Naive thymus-derived CD4-positive, alpha-beta T cell (primary cell): ENCODE measurements at regions of chr11 and their contacts with region 1.

Region 1: DNA sequence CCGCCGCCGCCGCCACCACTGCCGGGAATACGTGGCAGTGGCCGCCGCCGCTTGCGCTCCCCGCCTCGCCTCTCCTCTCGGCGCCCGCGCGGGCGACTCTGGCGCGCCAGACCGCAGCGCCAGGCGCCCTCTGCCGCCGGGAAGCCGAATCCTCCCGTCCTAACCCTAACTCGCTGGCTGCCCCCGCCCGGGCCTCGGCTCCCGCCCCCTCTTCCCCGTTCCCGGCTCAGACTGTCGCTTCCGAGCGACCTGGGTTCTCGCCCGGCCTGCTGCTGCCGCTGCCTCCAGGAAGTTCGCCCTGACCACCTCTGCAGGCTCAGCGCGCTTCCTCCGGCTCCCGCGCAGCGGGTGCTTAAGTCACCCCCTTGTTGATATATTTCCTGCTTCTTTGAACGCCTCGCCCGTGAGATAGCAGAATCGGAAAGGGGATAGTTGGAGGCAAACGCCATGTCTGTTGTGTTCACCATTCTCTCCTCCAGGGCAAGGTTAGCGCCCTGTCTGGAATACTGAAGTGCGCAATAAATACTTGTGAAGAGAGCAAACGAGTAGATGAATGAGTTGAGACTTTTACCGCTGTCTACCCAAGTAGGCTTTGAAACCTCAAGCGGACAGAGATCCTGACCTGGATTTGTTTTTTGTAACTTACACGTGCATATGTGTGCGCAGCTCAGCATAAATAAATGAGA is at the start of gene SMCO4:
- DNase-seq: peak; percentile 17 to 82 (median 40)
- ATAC-seq: peak; percentile 83
- H3K4me3 ChIP-seq: peak within 1 kb of the TSS; percentile 48
- H3K4me3 Mint-ChIP-seq: peak within 1 kb of the TSS; percentile 88 to 95 (median 92)
- H3K27ac ChIP-seq: peak within 1 kb of the TSS; percentile 33
- H3K27ac Mint-ChIP-seq: peak within 1 kb of the TSS in 7 of 9 donors; percentile 9 to 87 (median 52)
- H3K4me1 ChIP-seq: no peaks in the 10 kb centered on the region
- H3K4me1 Mint-ChIP-seq: peaks cover 6 to 39% (median 21%) of the 10 kb centered on the region in 7 donors
- H3K27me3 ChIP-seq: no peaks in the 10 kb centered on the region
- H3K27me3 Mint-ChIP-seq: peaks cover 0 to 16% (median 4%) of the 10 kb centered on the region in 5 donors
- total RNA-seq, gene SMCO4: 2.9 to 34.7 (median 5.9) TPM

Region 2: GRCh38 chr11:93197380-93198214 is 345.8 kb before region 1 on chr11 and contains the start of gene SLC36A4:
- CTCF ChIA-PET with region 1: no interaction called
- POLR2A ChIA-PET with region 1: no interaction called
- intact Hi-C with region 1: loop called in 1 of 2 experiments (anchors 2 kb)
- DNase-seq: peak; percentile 78 to 90 (median 88)
- ATAC-seq: peak; percentile 94
- H3K4me3 ChIP-seq: peak within 1 kb of the TSS; percentile 54
- H3K4me3 Mint-ChIP-seq: peak within 1 kb of the TSS; percentile 88 to 98 (median 95)
- H3K27ac ChIP-seq: peak within 1 kb of the TSS; percentile 96
- H3K27ac Mint-ChIP-seq: peak within 1 kb of the TSS; percentile 87 to 99 (median 97)
- H3K4me1 ChIP-seq: peaks cover 0 to 4% of the 10 kb centered on the region in 2 donors
- H3K4me1 Mint-ChIP-seq: peaks cover 15 to 40% (median 30%) of the 10 kb centered on the region in 7 donors
- H3K27me3 ChIP-seq: no peaks in the 10 kb centered on the region
- H3K27me3 Mint-ChIP-seq: peaks cover 0 to 24% (median 5%) of the 10 kb centered on the region in 5 donors
- total RNA-seq, gene SLC36A4: 12.0 to 22.0 (median 20.0) TPM

Region 3: DNA sequence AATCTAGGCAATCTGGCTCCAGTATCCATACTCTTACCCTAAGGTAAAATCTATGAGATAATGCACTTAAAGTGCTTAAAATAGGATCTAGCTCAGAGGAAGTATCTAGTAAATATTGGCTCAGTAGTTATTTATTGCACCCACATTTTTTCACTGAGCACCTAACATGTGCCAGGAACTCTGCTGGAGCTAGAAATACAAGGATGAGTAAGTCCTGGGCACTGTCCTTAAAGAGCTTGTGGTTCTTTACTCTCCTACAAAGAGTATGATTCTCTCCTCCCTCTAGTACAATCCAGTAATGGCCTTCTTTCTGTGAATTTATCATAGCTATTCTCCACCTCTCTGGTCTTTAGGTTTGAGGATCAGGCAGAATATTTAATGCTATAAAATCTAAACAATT is 153.7 kb before region 1 on chr11:
- CTCF ChIA-PET with region 1: no interaction called
- POLR2A ChIA-PET with region 1: no interaction called
- intact Hi-C with region 1: loop called in 1 of 2 experiments (anchors 10 kb)
- DNase-seq: no peak
- ATAC-seq: no peak
- H3K4me3 ChIP-seq: no peak overlapping the region
- H3K4me3 Mint-ChIP-seq: no peak overlapping the region
- H3K27ac ChIP-seq: no peak overlapping the region
- H3K27ac Mint-ChIP-seq: no peak overlapping the region
- H3K4me1 ChIP-seq: no peaks in the 10 kb centered on the region
- H3K4me1 Mint-ChIP-seq: no peaks in the 10 kb centered on the region
- H3K27me3 ChIP-seq: no peaks in the 10 kb centered on the region
- H3K27me3 Mint-ChIP-seq: peaks cover 8 to 21% (median 18%) of the 10 kb centered on the region in 5 donors

Region 4: GRCh38 chr11:93529707-93530467 is 13.5 kb before region 1 on chr11:
- CTCF ChIA-PET with region 1: interaction called, 4 read pairs
- POLR2A ChIA-PET with region 1: no interaction called
- intact Hi-C with region 1: loop called in 1 of 2 experiments (anchors 1 kb)
- DNase-seq: no peak
- ATAC-seq: peak; percentile 52
- H3K4me3 ChIP-seq: no peak overlapping the region
- H3K4me3 Mint-ChIP-seq: peak overlapping the region in 2 of 10 donors; percentile 22 to 66
- H3K27ac ChIP-seq: no peak overlapping the region
- H3K27ac Mint-ChIP-seq: peak overlapping the region in 4 of 9 donors; percentile 38 to 77 (median 74)
- H3K4me1 ChIP-seq: no peaks in the 10 kb centered on the region
- H3K4me1 Mint-ChIP-seq: peaks cover 7 to 78% (median 26%) of the 10 kb centered on the region in 7 donors
- H3K27me3 ChIP-seq: no peaks in the 10 kb centered on the region
- H3K27me3 Mint-ChIP-seq: no peaks in the 10 kb centered on the region

Region 5: DNA sequence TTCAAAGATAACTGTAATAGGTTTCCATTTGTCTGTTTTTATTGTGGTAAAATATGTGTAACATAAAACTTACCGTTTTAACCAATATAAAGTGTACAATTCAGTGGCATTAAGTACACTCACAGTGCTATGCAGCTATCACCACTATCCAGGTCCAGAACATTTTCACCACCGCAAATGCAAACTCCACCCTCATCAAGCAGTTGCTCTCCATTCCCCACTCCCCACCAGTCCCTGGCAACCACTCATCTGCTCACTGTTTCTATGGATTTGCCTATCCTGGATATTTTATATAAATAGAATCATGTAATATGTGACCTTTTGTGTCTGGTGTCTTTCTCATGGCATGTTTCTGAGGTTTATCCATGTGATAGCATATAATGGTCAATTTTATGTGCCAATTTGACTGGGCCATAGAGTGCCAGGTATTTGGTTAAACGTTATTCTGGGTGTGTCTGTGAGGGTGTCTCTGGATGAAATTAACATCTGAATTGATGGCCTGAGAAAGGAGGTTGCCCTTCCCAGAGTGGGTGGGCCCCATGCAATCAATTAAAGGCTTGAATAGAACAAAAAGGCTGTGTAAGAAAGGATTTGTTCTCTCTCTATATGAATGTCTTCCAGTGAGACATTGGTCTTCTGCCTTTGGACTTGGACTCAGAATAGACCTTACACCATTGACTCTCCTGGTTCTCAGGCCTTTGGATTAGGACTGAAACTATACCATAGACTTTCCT is 16.9 kb after region 1 on chr11:
- CTCF ChIA-PET with region 1: no interaction called
- POLR2A ChIA-PET with region 1: no interaction called
- intact Hi-C with region 1: no loop called
- DNase-seq: no peak
- ATAC-seq: no peak
- H3K4me3 ChIP-seq: no peak overlapping the region
- H3K4me3 Mint-ChIP-seq: no peak overlapping the region
- H3K27ac ChIP-seq: no peak overlapping the region
- H3K27ac Mint-ChIP-seq: no peak overlapping the region
- H3K4me1 ChIP-seq: no peaks in the 10 kb centered on the region
- H3K4me1 Mint-ChIP-seq: peaks cover 0 to 8% (median 0%) of the 10 kb centered on the region in 7 donors
- H3K27me3 ChIP-seq: no peaks in the 10 kb centered on the region
- H3K27me3 Mint-ChIP-seq: peaks cover 5 to 26% (median 14%) of the 10 kb centered on the region in 5 donors

Region 6: DNA sequence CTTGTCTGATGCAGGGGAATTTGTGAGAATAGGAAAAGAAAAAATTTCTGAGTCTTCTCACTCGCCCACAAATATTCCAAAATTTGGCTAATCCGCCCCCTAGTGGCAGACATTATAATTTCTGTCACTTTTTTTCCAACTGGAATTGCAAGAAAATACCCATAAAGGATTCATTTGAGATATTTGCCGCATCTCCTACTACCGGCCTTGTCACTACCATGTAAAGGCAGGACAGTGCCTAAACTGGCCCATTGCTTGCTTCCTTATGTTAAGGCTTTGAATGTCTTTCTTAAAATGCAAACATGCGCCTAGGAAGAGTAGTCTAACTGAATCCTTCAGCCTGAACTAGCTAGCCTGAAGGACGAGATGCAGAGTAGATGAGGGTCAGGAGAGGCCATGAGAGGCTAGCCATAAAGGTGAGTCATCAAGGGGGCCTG is 108.7 kb after region 1 on chr11:
- CTCF ChIA-PET with region 1: no interaction called
- POLR2A ChIA-PET with region 1: no interaction called
- intact Hi-C with region 1: loop called (anchors 1 to 2 kb)
- DNase-seq: peak in 6 of 9 donors; percentile 20 to 58 (median 37)
- ATAC-seq: no peak
- H3K4me3 ChIP-seq: no peak overlapping the region
- H3K4me3 Mint-ChIP-seq: no peak overlapping the region
- H3K27ac ChIP-seq: no peak overlapping the region
- H3K27ac Mint-ChIP-seq: no peak overlapping the region
- H3K4me1 ChIP-seq: no peaks in the 10 kb centered on the region
- H3K4me1 Mint-ChIP-seq: peaks cover 0 to 14% (median 8%) of the 10 kb centered on the region in 7 donors
- H3K27me3 ChIP-seq: no peaks in the 10 kb centered on the region
- H3K27me3 Mint-ChIP-seq: peaks cover 0 to 45% (median 4%) of the 10 kb centered on the region in 5 donors

Region 7: GRCh38 chr11:93741094-93741881 is 197.9 kb after region 1 on chr11 and contains the starts of genes C11orf54 and TAF1D:
- CTCF ChIA-PET with region 1: no interaction called
- POLR2A ChIA-PET with region 1: interaction called, 3 read pairs
- intact Hi-C with region 1: loop called (anchors 2 kb)
- DNase-seq: peak; percentile 85 to 98 (median 96)
- ATAC-seq: peak; percentile 96
- H3K4me3 ChIP-seq: peak within 1 kb of the TSS; percentile 88
- H3K4me3 Mint-ChIP-seq: peak within 1 kb of the TSS; percentile 95 to 100 (median 100)
- H3K27ac ChIP-seq: peak within 1 kb of the TSS; percentile 84
- H3K27ac Mint-ChIP-seq: peak within 1 kb of the TSS; percentile 98 to 100 (median 100)
- H3K4me1 ChIP-seq: peaks cover 28 to 31% of the 10 kb centered on the region in 2 donors
- H3K4me1 Mint-ChIP-seq: peaks cover 37 to 92% (median 71%) of the 10 kb centered on the region in 7 donors
- H3K27me3 ChIP-seq: no peaks in the 10 kb centered on the region
- H3K27me3 Mint-ChIP-seq: peaks cover 0 to 3% (median 0%) of the 10 kb centered on the region in 5 donors
- total RNA-seq, gene C11orf54: 16.4 to 42.5 (median 27.2) TPM
- total RNA-seq, gene TAF1D: 116 to 197 (median 183) TPM

Region 8: GRCh38 chr11:94128746-94129511 is 585.5 kb after region 1 on chr11 and contains the start of gene PANX1:
- CTCF ChIA-PET with region 1: no interaction called
- POLR2A ChIA-PET with region 1: no interaction called
- intact Hi-C with region 1: loop called in 1 of 2 experiments (anchors 5 kb)
- DNase-seq: peak; percentile 48 to 80 (median 74)
- ATAC-seq: peak; percentile 87
- H3K4me3 ChIP-seq: peak within 1 kb of the TSS; percentile 97
- H3K4me3 Mint-ChIP-seq: peak within 1 kb of the TSS in 2 of 10 donors; percentile 85 to 92
- H3K27ac ChIP-seq: peak within 1 kb of the TSS; percentile 73
- H3K27ac Mint-ChIP-seq: peak within 1 kb of the TSS; percentile 77 to 96 (median 89)
- H3K4me1 ChIP-seq: peaks cover 21 to 29% of the 10 kb centered on the region in 2 donors
- H3K4me1 Mint-ChIP-seq: peaks cover 18 to 32% (median 27%) of the 10 kb centered on the region in 7 donors
- H3K27me3 ChIP-seq: no peaks in the 10 kb centered on the region
- H3K27me3 Mint-ChIP-seq: no peaks in the 10 kb centered on the region
- total RNA-seq, gene PANX1: 5.6 to 14.8 (median 6.1) TPM